Mammary epithelial cell (primary cell): ENCODE measurements at regions of chr6 and their contacts with region 1.

Region 1: DNA sequence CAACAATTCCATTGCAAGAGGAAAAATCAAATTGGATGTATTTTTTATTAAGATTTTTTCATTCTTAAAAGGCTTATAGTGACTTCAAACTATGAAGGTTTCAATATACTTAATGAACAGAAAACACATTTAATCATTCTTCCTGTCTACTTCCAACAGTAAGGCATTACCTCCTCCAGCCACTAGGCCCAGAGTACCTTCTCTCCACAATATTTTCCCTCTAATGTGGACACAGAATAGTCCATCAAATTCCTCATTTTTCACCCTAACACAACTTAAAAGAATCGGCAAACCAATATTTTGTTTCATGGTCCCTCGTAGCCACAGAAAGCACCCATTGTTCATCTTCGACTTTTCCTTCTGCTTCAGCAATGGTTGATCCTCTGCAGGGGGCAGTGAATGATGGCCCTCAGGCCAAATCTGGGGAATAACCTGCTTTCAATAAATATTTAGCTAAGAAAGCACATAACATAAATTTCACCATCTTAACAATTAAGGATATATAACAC is 335.4 kb upstream of the ID4 start:
- DNase-seq: no peak
- H3K4me3 ChIP-seq: no peak overlapping the region
- H3K27ac ChIP-seq: no peak overlapping the region
- H3K4me1 ChIP-seq: no peaks in the 10 kb centered on the region
- H3K27me3 ChIP-seq: no peaks in the 10 kb centered on the region
- CTCF ChIP-seq: peak in 1 of 2 donors; percentile 7

Region 2: DNA sequence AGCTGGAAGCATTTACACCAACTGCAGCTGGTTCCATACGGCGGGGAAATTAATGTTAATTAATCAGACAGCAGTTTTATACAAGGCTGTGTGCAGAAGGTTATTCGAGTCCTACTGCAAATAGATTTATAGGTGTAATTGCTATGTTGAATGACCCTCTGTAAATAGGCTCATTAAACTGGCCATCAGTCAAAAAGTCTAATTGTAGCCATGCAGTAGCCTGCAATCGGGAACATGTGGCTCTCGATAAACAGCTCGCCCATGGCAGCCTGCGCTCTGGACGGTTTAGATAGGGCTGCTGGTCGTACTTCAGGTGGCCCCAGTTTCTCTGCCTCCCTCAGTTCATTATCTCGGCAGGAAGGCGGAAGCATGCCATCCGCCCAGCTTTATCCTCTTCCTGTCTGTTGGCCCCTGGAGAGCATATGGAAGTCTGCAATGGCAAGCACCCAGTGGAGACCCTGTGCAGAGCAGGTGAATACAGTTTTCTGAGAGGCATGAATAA is 567.3 kb after region 1 on chr6:
- CTCF ChIA-PET with region 1: interaction called, 11 read pairs
- dilution Hi-C with region 1: no loop called
- in situ Hi-C with region 1: no loop called
- intact Hi-C with region 1: no loop called
- DNase-seq: no peak
- H3K4me3 ChIP-seq: no peak overlapping the region
- H3K27ac ChIP-seq: no peak overlapping the region
- H3K4me1 ChIP-seq: no peaks in the 10 kb centered on the region
- H3K27me3 ChIP-seq: no peaks in the 10 kb centered on the region
- CTCF ChIP-seq: no peak